ENCODE measurements at regions of chr15 and their contacts with region 1.

Region 1: DNA sequence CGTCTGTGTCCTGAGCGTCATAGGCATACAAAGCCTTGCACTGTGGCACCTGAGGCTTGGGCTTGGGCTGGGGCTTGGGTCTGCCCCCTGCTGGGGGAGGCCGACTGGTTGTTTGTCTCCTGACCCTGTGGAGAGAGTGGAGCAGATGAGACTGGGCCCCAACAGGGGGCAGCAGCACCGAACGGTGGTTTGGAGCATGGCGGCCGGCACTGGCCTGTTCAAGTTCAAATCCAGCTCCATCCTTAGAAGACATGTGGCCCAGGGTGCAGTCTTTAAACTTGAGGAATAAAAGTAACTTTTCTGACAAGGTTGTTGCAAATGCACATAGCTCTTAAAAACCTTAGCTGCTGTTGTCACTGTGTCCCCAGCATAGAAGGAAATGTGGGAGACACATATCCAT is 33.3 kb downstream of the CCNB2 start:
- DNase-seq: peak; percentile 40 to 61 (median 56)
- H3K4me3 ChIP-seq: no peak overlapping the region
- H3K4me3 Mint-ChIP-seq: no peak overlapping the region
- H3K27ac ChIP-seq: no peak overlapping the region
- H3K27ac Mint-ChIP-seq: peak overlapping the region in 3 of 7 donors; percentile 2 to 71 (median 9)
- H3K4me1 ChIP-seq: peaks cover 7% of the 10 kb centered on the region
- H3K4me1 Mint-ChIP-seq: peaks cover 9 to 16% (median 11%) of the 10 kb centered on the region in 4 donors
- H3K27me3 ChIP-seq: no peaks in the 10 kb centered on the region
- H3K27me3 Mint-ChIP-seq: no peaks in the 10 kb centered on the region

Region 2: GRCh38 chr15:58957101-58957973 is 180.9 kb before region 1 on chr15:
- CTCF ChIA-PET with region 1: interaction called, 5 read pairs
- POLR2A ChIA-PET with region 1: no interaction called
- intact Hi-C with region 1: loop called (anchors 1 kb)
- DNase-seq: peak; percentile 63 to 69 (median 66)
- H3K4me3 ChIP-seq: no peak overlapping the region
- H3K4me3 Mint-ChIP-seq: peak overlapping the region in 1 of 8 donors; percentile 41
- H3K27ac ChIP-seq: no peak overlapping the region
- H3K27ac Mint-ChIP-seq: peak overlapping the region in 2 of 7 donors; percentile 70 to 84
- H3K4me1 ChIP-seq: peaks cover 4% of the 10 kb centered on the region
- H3K4me1 Mint-ChIP-seq: peaks cover 5 to 6% (median 6%) of the 10 kb centered on the region in 4 donors
- H3K27me3 ChIP-seq: no peaks in the 10 kb centered on the region
- H3K27me3 Mint-ChIP-seq: peaks cover 0 to 1% of the 10 kb centered on the region in 2 donors

Region 3: GRCh38 chr15:59157840-59158700 is 19.8 kb after region 1 on chr15:
- CTCF ChIA-PET with region 1: no interaction called
- POLR2A ChIA-PET with region 1: no interaction called
- intact Hi-C with region 1: no loop called
- DNase-seq: no peak
- H3K4me3 ChIP-seq: no peak overlapping the region
- H3K4me3 Mint-ChIP-seq: no peak overlapping the region
- H3K27ac ChIP-seq: no peak overlapping the region
- H3K27ac Mint-ChIP-seq: no peak overlapping the region
- H3K4me1 ChIP-seq: no peaks in the 10 kb centered on the region
- H3K4me1 Mint-ChIP-seq: no peaks in the 10 kb centered on the region
- H3K27me3 ChIP-seq: no peaks in the 10 kb centered on the region
- H3K27me3 Mint-ChIP-seq: no peaks in the 10 kb centered on the region